IMR-90 (cell line): ENCODE measurements at regions of chr17 and their contacts with region 1.

Region 1: DNA sequence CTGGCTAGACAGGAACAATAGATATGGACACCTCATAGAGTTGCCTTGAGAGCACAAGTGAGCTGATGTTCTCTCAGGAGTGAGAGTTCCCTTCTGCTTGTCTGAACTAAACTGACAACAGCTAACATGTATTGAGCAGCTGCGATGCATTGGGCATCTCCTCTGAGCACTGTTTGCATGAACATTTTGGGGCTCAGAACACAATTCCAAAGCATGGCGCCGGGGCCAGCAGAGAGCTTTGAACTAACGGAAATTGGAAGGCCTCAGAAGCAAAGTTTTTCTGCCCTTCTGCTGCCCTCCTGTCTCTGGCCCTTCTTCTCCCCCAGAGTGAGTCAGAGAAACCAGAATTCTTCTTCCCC is 38.1 kb downstream of the TRPV2 start:
- DNase-seq: no peak
- ATAC-seq: peak; percentile 6; the same call in 1 of the 2 replicates
- H3K4me3 ChIP-seq: no peak overlapping the region
- H3K27ac ChIP-seq: no peak overlapping the region
- H3K4me1 ChIP-seq: no peaks in the 10 kb centered on the region
- H3K27me3 ChIP-seq: no peaks in the 10 kb centered on the region
- CTCF ChIP-seq: no peak
- POLR2A ChIP-seq: no peak
- RAD21 ChIP-seq: no peak

Region 2: DNA sequence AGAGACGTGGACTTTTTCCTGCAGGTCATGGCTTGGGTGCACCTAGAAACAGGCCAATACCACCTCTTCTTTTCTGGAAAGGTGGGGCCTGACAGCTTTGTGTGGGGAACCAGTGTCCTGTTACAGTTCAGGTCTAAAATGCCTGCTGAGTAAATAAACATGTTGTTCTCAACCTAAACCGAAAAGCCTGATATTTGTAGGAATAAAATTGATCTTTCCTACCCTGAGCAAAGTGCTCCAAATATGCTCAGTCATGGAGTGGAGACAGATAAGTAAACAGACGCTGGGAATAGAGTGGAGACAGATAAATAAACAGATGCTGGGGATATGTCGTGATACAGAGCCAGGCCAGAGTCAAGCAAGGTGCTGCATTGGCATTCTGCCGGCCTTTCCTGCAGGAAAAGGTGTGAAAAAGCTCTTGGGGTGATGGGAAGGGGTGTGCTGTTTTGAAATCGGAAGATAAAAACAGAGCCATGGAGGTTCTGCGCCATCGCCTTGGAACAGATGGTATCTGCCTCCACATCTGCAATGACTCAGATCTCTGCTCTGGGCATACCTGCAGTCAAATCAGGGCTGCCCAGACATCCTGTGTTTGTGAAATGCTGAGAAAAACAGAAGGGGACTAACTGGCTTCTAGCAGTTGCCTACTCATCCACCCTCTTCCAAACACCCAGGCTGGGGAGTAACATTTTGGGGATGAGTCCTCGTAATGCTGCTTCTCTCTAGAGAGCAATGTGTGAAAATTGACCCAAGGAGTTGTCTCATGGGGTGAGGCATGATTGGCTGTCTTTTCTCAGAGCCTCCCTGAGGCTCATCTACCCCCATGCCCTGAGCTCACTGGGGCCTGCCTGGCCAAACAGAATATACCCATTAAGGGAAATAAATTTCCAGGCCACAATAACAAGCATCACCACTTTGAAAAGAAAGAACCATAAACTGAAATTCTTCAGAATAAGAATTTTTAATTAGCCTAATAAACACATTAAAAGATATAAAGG is 54.9 kb before region 1 on chr17:
- CTCF ChIA-PET with region 1: no interaction called
- POLR2A ChIA-PET with region 1: no interaction called
- dilution Hi-C with region 1: no loop called
- in situ Hi-C with region 1: no loop called
- intact Hi-C with region 1: no loop called
- DNase-seq: no peak
- ATAC-seq: peak; percentile 42
- H3K4me3 ChIP-seq: no peak overlapping the region
- H3K27ac ChIP-seq: no peak overlapping the region
- H3K4me1 ChIP-seq: no peaks in the 10 kb centered on the region; the same call in 1 of the 2 replicates
- H3K27me3 ChIP-seq: no peaks in the 10 kb centered on the region
- CTCF ChIP-seq: no peak
- POLR2A ChIP-seq: no peak
- RAD21 ChIP-seq: no peak

Region 3: DNA sequence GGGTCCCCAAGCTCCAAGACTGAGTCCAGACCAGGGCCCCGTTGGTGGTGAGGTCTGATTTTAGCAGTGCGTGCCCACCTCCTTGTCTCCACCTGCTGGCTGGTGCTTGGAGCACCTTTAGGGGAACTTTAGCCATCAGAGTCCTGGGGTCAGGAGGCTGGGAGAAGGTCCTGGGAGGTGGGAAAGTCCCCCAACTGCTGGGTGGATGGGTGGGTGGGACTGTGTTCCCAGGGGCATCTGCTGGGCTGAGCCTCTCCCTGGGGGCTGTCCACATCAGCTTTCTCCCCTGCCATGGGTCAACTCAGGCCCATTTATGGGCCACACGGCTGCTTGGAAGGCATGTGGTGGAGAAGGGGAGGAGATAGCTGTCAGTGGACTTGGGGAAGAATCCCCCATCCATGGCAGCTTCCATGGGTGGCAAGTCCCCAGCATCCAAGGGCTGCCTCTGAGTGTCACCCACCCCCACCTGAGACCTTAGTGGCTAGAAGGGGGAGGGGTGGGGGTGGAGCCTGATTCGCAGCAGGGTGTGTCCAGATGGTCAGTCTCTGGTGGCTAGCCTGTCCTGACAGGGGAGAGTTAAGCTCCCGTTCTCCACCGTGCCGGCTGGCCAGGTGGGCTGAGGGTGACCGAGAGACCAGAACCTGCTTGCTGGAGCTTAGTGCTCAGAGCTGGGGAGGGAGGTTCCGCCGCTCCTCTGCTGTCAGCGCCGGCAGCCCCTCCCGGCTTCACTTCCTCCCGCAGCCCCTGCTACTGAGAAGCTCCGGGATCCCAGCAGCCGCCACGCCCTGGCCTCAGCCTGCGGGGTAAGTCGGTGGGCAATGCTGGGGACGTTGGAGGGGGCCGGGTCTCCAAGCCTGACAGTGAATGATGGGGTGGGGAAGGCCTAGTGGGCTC is 38.2 kb before region 1 on chr17 and contains the start of gene TRPV2:
- CTCF ChIA-PET with region 1: no interaction called
- POLR2A ChIA-PET with region 1: no interaction called
- dilution Hi-C with region 1: no loop called
- in situ Hi-C with region 1: no loop called
- intact Hi-C with region 1: no loop called
- DNase-seq: no peak
- ATAC-seq: peak; percentile 10; the same call in 1 of the 2 replicates
- H3K4me3 ChIP-seq: peak within 1 kb of the TSS; percentile 61
- H3K27ac ChIP-seq: peak within 1 kb of the TSS; percentile 65
- H3K4me1 ChIP-seq: peaks cover 33% of the 10 kb centered on the region
- H3K27me3 ChIP-seq: no peaks in the 10 kb centered on the region
- CTCF ChIP-seq: 0 out of 2 replicates have a peak, but pooled peaks have one; percentile 18
- POLR2A ChIP-seq: no peak
- RAD21 ChIP-seq: no peak
- total RNA-seq, gene TRPV2: 27.2 and 30.8 TPM in 2 replicates

Region 4: GRCh38 chr17:16589097-16589969 is 135.9 kb after region 1 on chr17:
- CTCF ChIA-PET with region 1: interaction called, 3 read pairs
- POLR2A ChIA-PET with region 1: no interaction called
- dilution Hi-C with region 1: no loop called
- in situ Hi-C with region 1: no loop called
- intact Hi-C with region 1: loop called (anchors 2 kb)
- DNase-seq: peak; percentile 78
- ATAC-seq: peak; percentile 99
- H3K4me3 ChIP-seq: peak overlapping the region; percentile 64
- H3K27ac ChIP-seq: no peak overlapping the region
- H3K4me1 ChIP-seq: no peaks in the 10 kb centered on the region
- H3K27me3 ChIP-seq: peaks cover 9% of the 10 kb centered on the region
- CTCF ChIP-seq: peak; percentile 96
- POLR2A ChIP-seq: no peak
- RAD21 ChIP-seq: peak; percentile 73